Mammary epithelial cell (primary cell): ENCODE measurements at regions of chr10 and their contacts with region 1.

Region 1: GRCh38 chr10:43170491-43170890 is 32.2 kb downstream of the CSGALNACT2 start:
- DNase-seq: no peak
- H3K4me3 ChIP-seq: no peak overlapping the region
- H3K27ac ChIP-seq: no peak overlapping the region
- H3K4me1 ChIP-seq: peaks cover 12% of the 10 kb centered on the region
- H3K27me3 ChIP-seq: no peaks in the 10 kb centered on the region
- CTCF ChIP-seq: peak; percentile 5 to 33

Region 2: GRCh38 chr10:43211030-43211429 is 40.5 kb after region 1 on chr10:
- CTCF ChIA-PET with region 1: no interaction called
- dilution Hi-C with region 1: no loop called
- in situ Hi-C with region 1: no loop called
- intact Hi-C with region 1: no loop called
- DNase-seq: peak; percentile 17
- H3K4me3 ChIP-seq: no peak overlapping the region
- H3K27ac ChIP-seq: no peak overlapping the region
- H3K4me1 ChIP-seq: peaks cover 20% of the 10 kb centered on the region
- H3K27me3 ChIP-seq: no peaks in the 10 kb centered on the region
- CTCF ChIP-seq: no peak

Region 3: DNA sequence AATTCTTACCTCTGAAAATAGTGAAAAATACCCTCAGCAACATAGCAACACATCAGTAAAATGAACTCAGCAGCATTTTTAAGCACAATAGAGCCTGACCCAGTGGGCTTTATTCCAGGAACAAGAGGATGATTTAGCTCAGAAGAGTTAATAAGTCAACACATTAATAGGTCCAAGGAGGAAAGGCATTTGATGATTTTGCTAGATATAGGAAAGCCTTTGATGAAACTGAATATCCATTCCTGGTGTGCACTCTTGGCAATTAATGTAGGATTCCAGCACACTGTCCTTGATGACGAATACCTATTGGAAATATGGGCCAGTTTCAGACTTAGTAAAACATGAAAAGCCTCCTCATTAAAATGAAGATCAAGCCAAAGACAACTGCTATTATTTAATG is 53.8 kb after region 1 on chr10:
- CTCF ChIA-PET with region 1: no interaction called
- dilution Hi-C with region 1: no loop called
- in situ Hi-C with region 1: no loop called
- intact Hi-C with region 1: no loop called
- DNase-seq: no peak
- H3K4me3 ChIP-seq: no peak overlapping the region
- H3K27ac ChIP-seq: no peak overlapping the region
- H3K4me1 ChIP-seq: peaks cover 2% of the 10 kb centered on the region
- H3K27me3 ChIP-seq: peaks cover 4% of the 10 kb centered on the region
- CTCF ChIP-seq: no peak

Region 4: GRCh38 chr10:43234471-43235041 is 64.1 kb after region 1 on chr10:
- CTCF ChIA-PET with region 1: no interaction called
- dilution Hi-C with region 1: loop called (anchors 5 kb)
- in situ Hi-C with region 1: no loop called
- intact Hi-C with region 1: no loop called
- DNase-seq: no peak
- H3K4me3 ChIP-seq: no peak overlapping the region
- H3K27ac ChIP-seq: no peak overlapping the region
- H3K4me1 ChIP-seq: peaks cover 4% of the 10 kb centered on the region
- H3K27me3 ChIP-seq: peaks cover 8% of the 10 kb centered on the region
- CTCF ChIP-seq: no peak